ENCODE measurements at regions of chr3 and their contacts with region 1.

Region 1: GRCh38 chr3:153768561-153769469 is 352.4 kb upstream of the ARHGEF26 start:
- DNase-seq: peak; percentile 12 to 67 (median 59)
- ATAC-seq: peak; percentile 96
- H3K4me3 ChIP-seq: no peak overlapping the region
- H3K4me3 Mint-ChIP-seq: no peak overlapping the region
- H3K27ac ChIP-seq: no peak overlapping the region
- H3K27ac Mint-ChIP-seq: peak overlapping the region in 1 of 9 donors; percentile 74
- H3K4me1 ChIP-seq: no peaks in the 10 kb centered on the region
- H3K4me1 Mint-ChIP-seq: peaks cover 0 to 12% (median 0%) of the 10 kb centered on the region in 7 donors
- H3K27me3 ChIP-seq: no peaks in the 10 kb centered on the region
- H3K27me3 Mint-ChIP-seq: peaks cover 6 to 28% (median 11%) of the 10 kb centered on the region in 5 donors

Region 2: GRCh38 chr3:153209596-153209995 is 559.2 kb before region 1 on chr3:
- CTCF ChIA-PET with region 1: no interaction called
- POLR2A ChIA-PET with region 1: no interaction called
- intact Hi-C with region 1: loop called (anchors 2 to 5 kb)
- DNase-seq: no peak
- ATAC-seq: peak; percentile 85
- H3K4me3 ChIP-seq: no peak overlapping the region
- H3K4me3 Mint-ChIP-seq: peak overlapping the region in 9 of 10 donors; percentile 20 to 80 (median 72)
- H3K27ac ChIP-seq: no peak overlapping the region
- H3K27ac Mint-ChIP-seq: peak overlapping the region in 7 of 9 donors; percentile 0 to 87 (median 71)
- H3K4me1 ChIP-seq: peaks cover 6 to 14% of the 10 kb centered on the region in 2 donors
- H3K4me1 Mint-ChIP-seq: peaks cover 15 to 60% (median 45%) of the 10 kb centered on the region in 7 donors
- H3K27me3 ChIP-seq: no peaks in the 10 kb centered on the region
- H3K27me3 Mint-ChIP-seq: peaks cover 0 to 1% (median 0%) of the 10 kb centered on the region in 5 donors

Region 3: DNA sequence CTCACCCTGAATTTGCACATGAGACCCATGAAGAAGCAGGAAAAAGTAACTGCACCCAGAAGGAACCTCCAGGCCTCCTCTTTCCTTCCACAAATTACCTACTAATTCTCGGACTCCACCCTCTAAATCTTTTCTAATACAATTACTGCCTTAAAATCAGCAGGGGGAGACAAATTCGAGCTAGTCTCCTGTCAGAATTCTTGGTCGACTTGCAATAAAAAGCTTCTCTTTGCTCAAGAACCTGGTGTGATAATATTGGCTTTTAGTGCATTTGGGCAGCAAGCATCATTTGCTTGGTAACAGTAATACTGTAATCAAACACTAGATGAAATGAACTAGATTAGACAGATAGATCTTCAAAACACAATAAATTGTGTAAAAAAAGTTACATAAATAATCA is 324.9 kb before region 1 on chr3:
- CTCF ChIA-PET with region 1: interaction called, 4 read pairs
- POLR2A ChIA-PET with region 1: no interaction called
- intact Hi-C with region 1: loop called (anchors 1 kb)
- DNase-seq: peak in 5 of 9 donors; percentile 8 to 24 (median 12)
- ATAC-seq: no peak
- H3K4me3 ChIP-seq: no peak overlapping the region
- H3K4me3 Mint-ChIP-seq: no peak overlapping the region
- H3K27ac ChIP-seq: no peak overlapping the region
- H3K27ac Mint-ChIP-seq: peak overlapping the region in 1 of 9 donors; percentile 22
- H3K4me1 ChIP-seq: no peaks in the 10 kb centered on the region
- H3K4me1 Mint-ChIP-seq: peaks cover 5 to 26% (median 16%) of the 10 kb centered on the region in 7 donors
- H3K27me3 ChIP-seq: no peaks in the 10 kb centered on the region
- H3K27me3 Mint-ChIP-seq: no peaks in the 10 kb centered on the region

Region 4: DNA sequence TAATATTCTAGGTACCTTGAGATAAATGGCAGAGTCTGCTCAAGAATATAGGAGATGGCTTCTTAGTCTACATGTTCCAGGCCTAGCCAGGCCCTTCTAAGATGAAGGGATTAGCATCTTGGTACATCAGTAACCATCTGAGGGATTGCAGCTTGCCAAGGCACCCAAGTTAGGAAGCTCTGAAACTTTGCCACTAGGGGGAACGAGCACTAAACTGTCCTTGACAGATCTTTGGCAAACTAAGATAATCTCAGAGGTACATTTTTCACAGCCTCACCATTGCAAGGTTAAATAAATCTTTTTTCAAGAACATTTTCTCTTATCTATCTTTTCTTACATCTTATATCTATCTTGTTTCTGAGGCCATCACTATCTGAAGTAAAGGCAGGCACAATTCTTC is 255.6 kb before region 1 on chr3:
- CTCF ChIA-PET with region 1: interaction called, 4 read pairs
- POLR2A ChIA-PET with region 1: no interaction called
- intact Hi-C with region 1: loop called in 1 of 2 experiments (anchors 1 kb)
- DNase-seq: peak in 5 of 9 donors; percentile 19 to 25 (median 21)
- ATAC-seq: peak; percentile 38
- H3K4me3 ChIP-seq: no peak overlapping the region
- H3K4me3 Mint-ChIP-seq: no peak overlapping the region
- H3K27ac ChIP-seq: no peak overlapping the region
- H3K27ac Mint-ChIP-seq: no peak overlapping the region
- H3K4me1 ChIP-seq: no peaks in the 10 kb centered on the region
- H3K4me1 Mint-ChIP-seq: no peaks in the 10 kb centered on the region
- H3K27me3 ChIP-seq: no peaks in the 10 kb centered on the region
- H3K27me3 Mint-ChIP-seq: no peaks in the 10 kb centered on the region

Region 5: DNA sequence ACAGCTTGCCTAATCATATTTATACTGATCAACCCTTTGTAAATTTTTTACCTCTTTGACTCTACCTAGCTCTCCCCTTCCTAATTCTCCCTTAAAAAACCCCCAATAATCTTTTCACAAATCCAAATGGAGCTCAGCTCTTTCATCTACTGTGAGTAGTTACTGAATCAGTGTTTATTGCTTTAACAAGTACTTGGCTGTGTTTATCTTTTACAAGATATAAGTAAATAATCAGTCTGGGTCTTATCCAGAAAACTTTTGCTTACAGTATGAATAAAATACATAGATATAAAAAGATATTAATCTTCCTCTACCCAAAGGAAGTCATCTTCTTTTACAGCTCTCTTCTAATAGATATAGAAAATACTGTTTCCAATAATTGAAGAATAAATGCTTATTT is 240.3 kb before region 1 on chr3:
- CTCF ChIA-PET with region 1: no interaction called
- POLR2A ChIA-PET with region 1: no interaction called
- intact Hi-C with region 1: loop called in 1 of 2 experiments (anchors 5 kb)
- DNase-seq: no peak
- ATAC-seq: no peak
- H3K4me3 ChIP-seq: no peak overlapping the region
- H3K4me3 Mint-ChIP-seq: no peak overlapping the region
- H3K27ac ChIP-seq: no peak overlapping the region
- H3K27ac Mint-ChIP-seq: no peak overlapping the region
- H3K4me1 ChIP-seq: no peaks in the 10 kb centered on the region
- H3K4me1 Mint-ChIP-seq: no peaks in the 10 kb centered on the region
- H3K27me3 ChIP-seq: no peaks in the 10 kb centered on the region
- H3K27me3 Mint-ChIP-seq: peaks cover 0 to 6% (median 0%) of the 10 kb centered on the region in 5 donors

Region 6: DNA sequence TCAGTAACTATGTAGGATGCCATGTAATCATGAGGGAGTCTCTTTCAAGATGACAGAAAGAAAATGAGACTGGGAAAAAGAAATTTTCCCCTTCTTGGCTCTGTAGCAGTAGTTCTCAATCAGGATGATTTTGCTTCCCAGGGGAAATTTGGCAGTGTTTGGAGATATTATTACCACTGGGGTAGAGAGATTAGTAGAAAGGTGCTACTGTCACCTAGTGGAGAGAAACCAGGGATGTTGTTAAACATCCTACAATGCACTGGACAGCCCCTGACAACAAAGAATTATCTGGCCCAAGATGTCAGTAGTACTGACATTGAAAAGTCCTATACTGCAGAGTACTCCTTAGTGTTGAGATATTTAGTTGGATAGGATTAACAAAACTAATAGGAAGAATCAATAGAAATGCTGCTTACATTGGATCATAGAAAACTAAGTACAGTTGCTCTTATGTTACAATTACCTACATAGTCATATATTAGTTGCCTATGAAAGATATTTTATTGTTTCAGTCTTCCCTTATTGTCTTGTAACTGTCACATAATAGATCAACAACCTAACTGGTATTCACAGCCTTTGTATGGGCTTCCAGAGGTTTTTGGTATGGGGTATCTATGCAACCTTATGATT is 173.5 kb before region 1 on chr3:
- CTCF ChIA-PET with region 1: no interaction called
- POLR2A ChIA-PET with region 1: no interaction called
- intact Hi-C with region 1: loop called (anchors 1 to 2 kb)
- DNase-seq: peak in 5 of 9 donors; percentile 1 to 25 (median 11)
- ATAC-seq: peak; percentile 45
- H3K4me3 ChIP-seq: no peak overlapping the region
- H3K4me3 Mint-ChIP-seq: no peak overlapping the region
- H3K27ac ChIP-seq: no peak overlapping the region
- H3K27ac Mint-ChIP-seq: no peak overlapping the region
- H3K4me1 ChIP-seq: no peaks in the 10 kb centered on the region
- H3K4me1 Mint-ChIP-seq: peaks cover 0 to 15% (median 6%) of the 10 kb centered on the region in 7 donors
- H3K27me3 ChIP-seq: no peaks in the 10 kb centered on the region
- H3K27me3 Mint-ChIP-seq: no peaks in the 10 kb centered on the region

Region 7: DNA sequence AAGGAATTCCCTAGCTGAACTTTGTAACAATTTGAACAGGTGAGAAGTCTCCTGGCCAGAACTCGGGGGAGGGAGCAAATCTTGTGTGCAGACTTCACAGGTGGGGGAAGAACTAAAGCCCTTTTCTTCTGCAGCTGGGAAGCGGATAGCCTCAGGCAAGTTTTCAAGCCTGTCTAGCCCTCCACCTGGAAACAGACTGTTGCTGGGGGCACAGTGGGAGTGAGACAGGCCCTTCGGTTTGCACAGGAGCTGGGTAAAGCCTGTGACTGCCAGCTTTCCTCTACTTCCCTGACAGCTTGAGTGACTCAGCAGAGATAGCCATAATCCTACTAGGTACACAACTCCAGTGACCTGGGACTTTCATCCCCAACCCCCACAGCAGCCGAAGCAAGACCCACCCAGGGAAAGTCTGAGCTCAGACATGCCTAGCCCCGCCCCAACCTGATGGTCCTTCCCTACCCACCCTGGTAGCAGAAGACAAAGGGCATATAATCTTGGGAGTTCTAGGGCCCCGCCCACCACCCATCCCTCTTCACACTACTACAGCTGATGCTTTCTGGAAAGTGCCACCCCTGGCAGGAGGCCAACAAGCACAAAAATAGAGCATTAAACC is 128.0 kb before region 1 on chr3:
- CTCF ChIA-PET with region 1: no interaction called
- POLR2A ChIA-PET with region 1: no interaction called
- intact Hi-C with region 1: no loop called
- DNase-seq: no peak
- ATAC-seq: no peak
- H3K4me3 ChIP-seq: no peak overlapping the region
- H3K4me3 Mint-ChIP-seq: peak overlapping the region in 1 of 10 donors; percentile 68
- H3K27ac ChIP-seq: no peak overlapping the region
- H3K27ac Mint-ChIP-seq: no peak overlapping the region
- H3K4me1 ChIP-seq: peaks cover 16 to 24% of the 10 kb centered on the region in 2 donors
- H3K4me1 Mint-ChIP-seq: peaks cover 37 to 53% (median 45%) of the 10 kb centered on the region in 7 donors
- H3K27me3 ChIP-seq: no peaks in the 10 kb centered on the region
- H3K27me3 Mint-ChIP-seq: no peaks in the 10 kb centered on the region

Region 8: DNA sequence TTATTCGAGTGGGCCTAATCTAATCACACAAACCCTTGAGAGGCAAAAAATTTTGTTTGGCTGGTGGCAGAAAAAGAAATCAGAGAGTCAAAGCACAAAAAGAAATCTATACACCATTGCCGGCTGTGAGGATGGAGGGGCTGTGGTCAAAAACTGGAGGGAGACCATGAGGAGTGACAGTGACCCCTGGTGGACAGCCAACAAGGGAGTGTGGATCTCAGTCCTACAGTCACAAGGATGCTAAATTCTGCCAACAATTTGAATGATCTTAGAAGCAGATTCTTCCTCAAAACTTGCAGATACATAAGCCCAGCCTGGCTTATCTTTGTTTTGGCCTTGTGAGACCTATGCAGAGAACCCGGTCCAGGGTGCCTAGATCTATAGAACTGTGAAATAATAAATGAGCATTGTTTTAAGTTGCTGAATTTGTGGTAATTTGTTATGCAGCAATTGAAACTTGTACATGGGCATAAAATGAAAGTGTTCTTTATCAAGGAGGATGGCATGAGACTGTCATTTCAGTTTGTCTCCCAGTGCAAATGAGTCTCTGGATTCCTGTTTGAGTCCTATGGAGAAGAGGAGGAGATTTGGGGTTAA is 249.4 kb after region 1 on chr3:
- CTCF ChIA-PET with region 1: no interaction called
- POLR2A ChIA-PET with region 1: no interaction called
- intact Hi-C with region 1: loop called in 1 of 2 experiments (anchors 2 kb)
- DNase-seq: peak in 6 of 9 donors; percentile 4 to 21 (median 14)
- ATAC-seq: no peak
- H3K4me3 ChIP-seq: no peak overlapping the region
- H3K4me3 Mint-ChIP-seq: no peak overlapping the region
- H3K27ac ChIP-seq: no peak overlapping the region
- H3K27ac Mint-ChIP-seq: no peak overlapping the region
- H3K4me1 ChIP-seq: no peaks in the 10 kb centered on the region
- H3K4me1 Mint-ChIP-seq: no peaks in the 10 kb centered on the region
- H3K27me3 ChIP-seq: no peaks in the 10 kb centered on the region
- H3K27me3 Mint-ChIP-seq: peaks cover 0 to 13% (median 4%) of the 10 kb centered on the region in 5 donors

Region 9: GRCh38 chr3:155581579-155581978 is 1812.8 kb after region 1 on chr3:
- CTCF ChIA-PET with region 1: no interaction called
- POLR2A ChIA-PET with region 1: no interaction called
- intact Hi-C with region 1: no loop called
- DNase-seq: peak in 5 of 9 donors; percentile 0 to 44 (median 14)
- ATAC-seq: peak; percentile 63
- H3K4me3 ChIP-seq: no peak overlapping the region
- H3K4me3 Mint-ChIP-seq: peak overlapping the region in 7 of 10 donors; percentile 2 to 67 (median 24)
- H3K27ac ChIP-seq: no peak overlapping the region
- H3K27ac Mint-ChIP-seq: peak overlapping the region in 1 of 9 donors; percentile 71
- H3K4me1 ChIP-seq: no peaks in the 10 kb centered on the region
- H3K4me1 Mint-ChIP-seq: peaks cover 0 to 10% (median 0%) of the 10 kb centered on the region in 7 donors
- H3K27me3 ChIP-seq: no peaks in the 10 kb centered on the region
- H3K27me3 Mint-ChIP-seq: peaks cover 5 to 39% (median 7%) of the 10 kb centered on the region in 5 donors